Activated naive CD4-positive, alpha-beta T cell treated with anti-CD3 and anti-CD28 coated beads, Interleukin-2, amount 10 ng/mL, durations not matched to agents 7 days and 5 days (primary cell): ENCODE measurements at regions of chr16 and their contacts with region 1.

Region 1: DNA sequence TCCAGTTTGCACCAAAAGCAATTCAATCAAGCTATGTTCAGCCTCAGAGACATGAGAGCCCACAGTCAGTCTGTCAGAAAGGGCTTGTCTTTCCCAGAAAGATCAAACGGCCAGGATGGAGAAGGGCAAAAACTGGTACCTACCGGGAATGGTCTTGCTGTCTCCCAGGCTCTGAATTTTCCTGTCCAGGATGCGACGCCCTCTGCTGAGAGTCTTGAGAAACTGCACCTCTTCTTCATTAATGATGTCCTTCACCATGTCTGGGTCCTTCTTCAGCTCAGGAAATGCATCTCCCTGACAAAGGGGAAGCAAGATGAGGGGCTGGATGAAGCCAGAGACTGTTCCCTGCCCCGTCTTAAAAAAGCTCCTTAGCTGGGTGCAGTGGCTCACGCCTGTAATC is 15.8 kb upstream of the EXOSC6 start:
- DNase-seq: peak; percentile 49
- H3K4me3 Mint-ChIP-seq: no peak overlapping the region
- H3K27ac Mint-ChIP-seq: no peak overlapping the region
- H3K4me1 Mint-ChIP-seq: no peaks in the 10 kb centered on the region
- H3K27me3 Mint-ChIP-seq: no peaks in the 10 kb centered on the region

Region 2: GRCh38 chr16:70251629-70252354 is 15.7 kb before region 1 on chr16 and contains the start of gene EXOSC6:
- CTCF ChIA-PET with region 1: interaction called, 10 read pairs
- DNase-seq: peak; percentile 96
- H3K4me3 Mint-ChIP-seq: peak within 1 kb of the TSS; percentile 87
- H3K27ac Mint-ChIP-seq: peak within 1 kb of the TSS; percentile 97
- H3K4me1 Mint-ChIP-seq: peaks cover 25% of the 10 kb centered on the region
- H3K27me3 Mint-ChIP-seq: no peaks in the 10 kb centered on the region

Region 3: GRCh38 chr16:70257391-70257790 is 10.1 kb before region 1 on chr16:
- CTCF ChIA-PET with region 1: interaction called, 15 read pairs
- DNase-seq: no peak
- H3K4me3 Mint-ChIP-seq: no peak overlapping the region
- H3K27ac Mint-ChIP-seq: no peak overlapping the region
- H3K4me1 Mint-ChIP-seq: no peaks in the 10 kb centered on the region
- H3K27me3 Mint-ChIP-seq: no peaks in the 10 kb centered on the region

Region 4: GRCh38 chr16:70289229-70290098 is 21.9 kb after region 1 on chr16 and contains the start of gene AARS1:
- CTCF ChIA-PET with region 1: interaction called, 10 read pairs
- DNase-seq: peak; percentile 97
- H3K4me3 Mint-ChIP-seq: peak within 1 kb of the TSS; percentile 97
- H3K27ac Mint-ChIP-seq: peak within 1 kb of the TSS; percentile 99
- H3K4me1 Mint-ChIP-seq: peaks cover 40% of the 10 kb centered on the region
- H3K27me3 Mint-ChIP-seq: no peaks in the 10 kb centered on the region